ENCODE measurements at regions of chrX and their contacts with region 1.

Region 1: GRCh38 chrX:107894038-107894437 is 68.4 kb downstream of the MID2 start:
- DNase-seq: peak in 1 of 2 donors; percentile 75
- ATAC-seq: peak; percentile 47 to 78 (median 49)
- H3K4me3 ChIP-seq: no peak overlapping the region
- H3K4me3 Mint-ChIP-seq: no peak overlapping the region
- H3K27ac ChIP-seq: no peak overlapping the region
- H3K27ac Mint-ChIP-seq: no peak overlapping the region
- H3K4me1 ChIP-seq: no peaks in the 10 kb centered on the region
- H3K4me1 Mint-ChIP-seq: no peaks in the 10 kb centered on the region
- H3K27me3 ChIP-seq: no peaks in the 10 kb centered on the region
- H3K27me3 Mint-ChIP-seq: peaks cover 11 to 33% of the 10 kb centered on the region in 2 donors
- CTCF ChIP-seq: peak; percentile 57

Region 2: GRCh38 chrX:106481341-106481740 is 1412.7 kb before region 1 on chrX:
- intact Hi-C with region 1: loop called (anchors 10 kb)
- DNase-seq: peak in 1 of 2 donors; percentile 64
- ATAC-seq: peak in 2 of 3 donors; percentile 44 to 56
- H3K4me3 ChIP-seq: no peak overlapping the region
- H3K4me3 Mint-ChIP-seq: no peak overlapping the region
- H3K27ac ChIP-seq: no peak overlapping the region
- H3K27ac Mint-ChIP-seq: no peak overlapping the region
- H3K4me1 ChIP-seq: no peaks in the 10 kb centered on the region
- H3K4me1 Mint-ChIP-seq: peaks cover 17 to 23% of the 10 kb centered on the region in 2 donors
- H3K27me3 ChIP-seq: no peaks in the 10 kb centered on the region
- H3K27me3 Mint-ChIP-seq: peaks cover 0 to 14% of the 10 kb centered on the region in 2 donors
- CTCF ChIP-seq: peak; percentile 69

Region 3: DNA sequence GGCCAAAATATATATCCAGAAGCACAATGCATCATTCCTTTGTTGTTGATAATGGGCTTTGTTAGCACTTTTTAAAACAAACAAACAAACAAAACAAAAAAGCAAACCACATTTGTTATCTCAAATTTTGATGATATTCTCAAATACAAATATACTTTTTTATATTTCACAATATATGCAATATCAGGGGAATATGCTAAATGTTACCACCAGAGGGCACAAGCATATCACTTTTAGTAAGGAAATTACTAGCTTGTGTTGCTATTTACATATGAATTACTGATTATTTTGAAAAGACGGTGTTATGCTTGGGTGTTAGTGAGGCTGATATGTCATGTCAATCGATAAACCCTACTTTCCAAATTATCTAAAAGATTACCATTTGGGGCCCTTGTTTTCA is 1020.0 kb before region 1 on chrX:
- intact Hi-C with region 1: loop called (anchors 1 kb)
- DNase-seq: peak in 1 of 2 donors; percentile 45
- ATAC-seq: no peak
- H3K4me3 ChIP-seq: no peak overlapping the region
- H3K4me3 Mint-ChIP-seq: no peak overlapping the region
- H3K27ac ChIP-seq: no peak overlapping the region
- H3K27ac Mint-ChIP-seq: no peak overlapping the region
- H3K4me1 ChIP-seq: no peaks in the 10 kb centered on the region
- H3K4me1 Mint-ChIP-seq: no peaks in the 10 kb centered on the region
- H3K27me3 ChIP-seq: no peaks in the 10 kb centered on the region
- H3K27me3 Mint-ChIP-seq: peaks cover under 1 to 41% of the 10 kb centered on the region in 2 donors
- CTCF ChIP-seq: peak; percentile 40

Region 4: GRCh38 chrX:106898462-106898861 is 995.6 kb before region 1 on chrX:
- intact Hi-C with region 1: loop called (anchors 5 kb)
- DNase-seq: peak in 1 of 2 donors; percentile 63
- ATAC-seq: peak in 1 of 3 donors; percentile 70
- H3K4me3 ChIP-seq: no peak overlapping the region
- H3K4me3 Mint-ChIP-seq: no peak overlapping the region
- H3K27ac ChIP-seq: no peak overlapping the region
- H3K27ac Mint-ChIP-seq: no peak overlapping the region
- H3K4me1 ChIP-seq: no peaks in the 10 kb centered on the region
- H3K4me1 Mint-ChIP-seq: no peaks in the 10 kb centered on the region
- H3K27me3 ChIP-seq: no peaks in the 10 kb centered on the region
- H3K27me3 Mint-ChIP-seq: peaks cover 0 to 10% of the 10 kb centered on the region in 2 donors
- CTCF ChIP-seq: peak; percentile 14

Region 5: DNA sequence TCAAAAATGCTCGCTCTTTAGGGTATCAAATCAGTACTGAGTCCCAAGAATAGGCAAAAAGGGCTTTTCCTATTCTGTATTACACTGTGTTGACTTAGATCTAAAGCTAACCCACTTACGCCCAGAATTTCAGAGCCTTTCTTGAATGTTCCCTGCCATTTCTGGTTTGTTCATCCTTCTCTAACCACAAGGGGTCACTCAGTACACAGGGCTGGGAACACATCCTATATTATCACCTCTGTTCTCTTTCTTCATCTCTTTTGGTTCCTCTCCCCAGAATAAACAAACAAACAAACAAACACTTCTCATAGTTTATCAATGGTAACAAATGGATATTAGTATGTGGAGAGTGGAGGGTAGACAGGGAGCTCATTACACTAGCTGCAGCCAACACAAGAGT is 868.5 kb before region 1 on chrX:
- intact Hi-C with region 1: loop called (anchors 2 kb)
- DNase-seq: peak in 1 of 2 donors; percentile 32
- ATAC-seq: peak in 1 of 3 donors; percentile 44
- H3K4me3 ChIP-seq: no peak overlapping the region
- H3K4me3 Mint-ChIP-seq: no peak overlapping the region
- H3K27ac ChIP-seq: no peak overlapping the region
- H3K27ac Mint-ChIP-seq: no peak overlapping the region
- H3K4me1 ChIP-seq: no peaks in the 10 kb centered on the region
- H3K4me1 Mint-ChIP-seq: no peaks in the 10 kb centered on the region
- H3K27me3 ChIP-seq: no peaks in the 10 kb centered on the region
- H3K27me3 Mint-ChIP-seq: peaks cover 6 to 41% of the 10 kb centered on the region in 2 donors
- CTCF ChIP-seq: peak; percentile 24

Region 6: DNA sequence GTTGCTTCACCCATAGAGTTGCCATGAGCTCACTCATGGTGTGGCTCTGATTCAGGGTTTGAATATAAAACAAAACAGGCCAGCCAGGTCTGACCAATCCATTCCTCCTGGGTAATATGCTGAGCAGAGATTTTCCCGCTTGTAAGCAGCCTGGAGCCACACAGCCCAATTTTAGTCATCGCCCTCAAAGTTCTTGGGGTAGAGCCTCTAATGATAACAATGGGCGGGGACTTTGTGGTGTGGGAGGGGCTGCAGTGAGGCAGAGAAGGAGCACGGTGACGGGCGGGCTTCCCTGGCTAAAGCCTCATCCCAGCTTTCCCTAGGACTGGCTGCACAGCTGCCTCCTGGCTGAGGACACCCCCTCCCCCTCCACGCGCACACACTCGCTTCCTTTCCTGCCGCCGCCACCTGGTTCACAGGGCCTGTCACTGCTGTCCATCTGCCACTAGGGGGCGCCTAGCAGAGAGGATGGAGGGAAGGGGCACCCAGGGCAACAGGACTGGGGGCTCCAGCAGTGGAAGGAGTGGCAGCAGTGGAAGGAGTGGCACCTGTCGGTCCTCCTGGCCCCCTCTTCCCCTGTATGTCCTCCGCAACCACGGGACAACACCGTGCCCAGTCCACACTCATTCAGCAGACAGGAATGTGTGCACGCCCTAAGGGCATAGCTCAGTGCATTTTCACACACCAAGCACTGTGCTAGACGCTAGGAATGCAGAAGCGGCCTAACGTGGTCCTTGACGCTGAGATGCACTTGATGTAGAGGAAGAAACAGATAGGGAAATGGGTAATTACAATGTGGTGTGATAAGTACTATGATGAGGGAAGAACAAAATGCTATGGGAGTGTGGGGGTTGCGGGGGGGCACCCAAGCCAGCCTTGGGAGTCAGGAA is 238.9 kb before region 1 on chrX:
- intact Hi-C with region 1: loop called (anchors 5 kb)
- DNase-seq: peak; percentile 52 to 82
- ATAC-seq: peak; percentile 87 to 91 (median 89)
- H3K4me3 ChIP-seq: no peak overlapping the region
- H3K4me3 Mint-ChIP-seq: no peak overlapping the region
- H3K27ac ChIP-seq: no peak overlapping the region
- H3K27ac Mint-ChIP-seq: no peak overlapping the region
- H3K4me1 ChIP-seq: peaks cover 4% of the 10 kb centered on the region
- H3K4me1 Mint-ChIP-seq: peaks cover 0 to 5% of the 10 kb centered on the region in 2 donors
- H3K27me3 ChIP-seq: no peaks in the 10 kb centered on the region
- H3K27me3 Mint-ChIP-seq: no peaks in the 10 kb centered on the region
- CTCF ChIP-seq: peak; percentile 64

Measured in natural killer cell (primary cell).